ENCODE measurements at regions of chr1 and their contacts with region 1.

Region 1: DNA sequence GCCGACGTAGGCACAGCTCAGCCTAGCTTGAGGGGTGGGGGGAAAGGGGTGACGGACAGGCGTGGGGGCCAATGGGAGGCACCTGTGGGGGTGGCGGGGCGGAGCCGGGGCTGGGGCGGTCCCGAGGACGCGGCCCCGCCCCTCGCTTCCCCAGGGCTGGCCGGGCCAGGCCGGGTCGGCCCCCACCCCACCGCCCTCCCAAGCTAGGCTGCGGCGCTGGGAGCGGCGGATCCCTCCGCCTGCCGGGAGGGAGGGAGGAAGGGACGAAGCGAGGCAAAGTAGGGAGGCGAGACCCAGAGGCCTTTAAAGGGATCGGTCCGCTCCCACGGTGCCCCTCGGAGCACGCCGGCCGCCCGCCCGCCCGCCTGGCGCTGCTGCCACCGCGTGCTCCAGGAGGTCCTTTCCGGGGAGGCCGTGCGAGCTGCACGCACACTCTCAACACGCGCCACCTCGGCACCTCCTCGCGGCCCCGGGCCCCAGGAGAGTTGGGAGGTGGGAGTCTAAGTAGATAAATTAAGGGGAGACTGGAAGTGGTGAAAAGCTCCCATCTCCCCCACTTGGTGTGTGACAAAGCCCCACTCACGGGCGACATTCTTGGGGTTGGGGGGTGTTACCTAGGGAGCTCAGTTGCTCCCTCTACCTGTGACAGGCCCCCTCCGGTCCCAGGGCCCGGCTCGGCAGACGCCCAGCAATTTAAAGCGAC is 373 bp upstream of the MEF2D start:
- DNase-seq: peak; percentile 96
- ATAC-seq: peak; percentile 65
- H3K4me3 Mint-ChIP-seq: peak overlapping the region; percentile 88
- H3K27ac Mint-ChIP-seq: peak overlapping the region; percentile 99
- H3K4me1 Mint-ChIP-seq: peaks cover 73% of the 10 kb centered on the region
- H3K27me3 Mint-ChIP-seq: no peaks in the 10 kb centered on the region

Region 2: GRCh38 chr1:156212833-156213643 is 287.9 kb before region 1 on chr1 and contains the start of gene PMF1:
- CTCF ChIA-PET with region 1: interaction called, 3 read pairs
- POLR2A ChIA-PET with region 1: interaction called, 3 read pairs
- intact Hi-C with region 1: loop called in 1 of 2 experiments (anchors 5 kb)
- DNase-seq: peak; percentile 98
- ATAC-seq: peak; percentile 90
- H3K4me3 Mint-ChIP-seq: peak within 1 kb of the TSS; percentile 76
- H3K27ac Mint-ChIP-seq: peak within 1 kb of the TSS; percentile 98
- H3K4me1 Mint-ChIP-seq: peaks cover 41% of the 10 kb centered on the region
- H3K27me3 Mint-ChIP-seq: no peaks in the 10 kb centered on the region
- total RNA-seq, gene PMF1: 108 to 117 TPM

Region 3: DNA sequence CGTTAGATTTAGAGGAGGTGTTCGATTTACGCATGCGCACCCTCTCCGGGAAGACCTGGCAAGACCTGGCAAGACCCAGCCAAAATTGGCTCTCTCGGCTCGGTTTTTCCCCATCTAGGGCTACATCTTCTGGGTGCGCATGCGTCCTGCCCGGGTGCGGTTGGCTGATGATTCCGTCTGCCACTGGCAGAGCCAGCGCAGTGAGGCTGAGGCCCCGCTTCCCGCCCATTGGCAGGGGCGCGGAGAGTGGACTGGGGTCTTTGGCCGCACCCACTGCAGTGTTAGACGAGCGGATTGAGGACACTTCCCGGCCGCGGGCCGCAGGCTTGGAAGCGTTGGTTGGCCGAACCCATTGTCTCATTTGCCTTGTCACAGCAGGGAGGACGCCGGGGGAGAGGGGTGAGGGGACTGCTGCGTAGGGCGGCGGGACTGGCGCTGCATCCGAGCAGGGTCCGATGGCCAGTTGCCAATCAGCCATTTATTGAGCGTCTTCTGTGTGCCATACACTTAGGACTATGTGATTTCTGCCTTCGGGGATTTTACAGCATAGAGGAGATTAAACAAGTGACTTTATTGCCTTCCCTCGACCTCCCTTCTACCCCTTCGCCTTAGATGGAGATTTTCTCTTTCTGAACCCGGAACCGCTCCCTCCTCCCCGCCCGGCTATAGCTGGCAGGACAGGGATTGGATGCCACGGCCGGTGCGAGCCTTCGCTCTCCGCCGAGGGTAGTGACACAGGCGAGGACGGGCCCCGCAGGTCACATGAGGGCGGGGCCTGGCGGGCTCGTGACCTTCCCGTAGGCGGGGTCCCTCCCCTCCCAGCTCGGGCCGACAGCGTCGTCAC is 44.1 kb before region 1 on chr1:
- CTCF ChIA-PET with region 1: interaction called, 7 read pairs
- POLR2A ChIA-PET with region 1: interaction called, 6 read pairs
- intact Hi-C with region 1: loop called (anchors 1 kb)
- DNase-seq: peak; percentile 99
- ATAC-seq: peak; percentile 88
- H3K4me3 Mint-ChIP-seq: peak overlapping the region; percentile 79
- H3K27ac Mint-ChIP-seq: peak overlapping the region; percentile 98
- H3K4me1 Mint-ChIP-seq: peaks cover 22% of the 10 kb centered on the region
- H3K27me3 Mint-ChIP-seq: no peaks in the 10 kb centered on the region

Region 4: DNA sequence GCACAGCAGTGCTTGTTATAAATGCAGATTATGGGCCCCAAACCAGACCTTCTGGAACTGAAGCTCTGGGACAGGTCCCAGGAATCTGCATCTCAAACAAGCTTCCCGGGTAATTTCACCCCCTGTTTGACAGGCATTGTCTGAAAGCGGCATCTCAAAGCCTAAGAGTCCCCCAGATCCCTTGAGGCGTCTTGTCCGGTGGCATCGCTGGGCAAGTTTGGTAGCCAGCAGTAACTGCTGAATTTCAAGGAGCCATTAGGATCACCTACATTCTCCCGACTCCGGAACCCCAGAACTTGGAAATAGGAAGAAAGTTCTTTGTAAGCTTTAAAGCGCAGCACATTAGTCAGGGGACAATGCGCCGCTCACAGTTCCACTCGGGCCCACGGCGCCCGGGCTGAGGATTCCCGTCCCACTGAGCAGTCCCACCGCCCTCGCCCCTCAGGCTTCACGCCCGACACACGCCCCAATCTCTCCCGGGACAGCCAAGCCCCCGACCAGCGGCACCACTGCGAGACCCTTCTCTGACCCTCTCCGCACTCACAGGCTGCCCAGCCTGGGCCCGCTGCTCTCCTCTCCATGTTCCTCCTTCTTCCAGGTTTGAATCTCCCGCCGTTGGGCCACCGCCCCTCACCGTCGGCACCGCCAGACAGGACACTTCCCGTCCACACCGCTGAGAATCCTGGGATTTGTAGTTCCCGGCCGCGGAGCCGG is 71.2 kb after region 1 on chr1 and contains the start of gene IQGAP3:
- CTCF ChIA-PET with region 1: no interaction called
- POLR2A ChIA-PET with region 1: interaction called, 3 read pairs
- intact Hi-C with region 1: loop called in 1 of 2 experiments (anchors 2 kb)
- DNase-seq: peak; percentile 87
- ATAC-seq: peak; percentile 96
- H3K4me3 Mint-ChIP-seq: peak within 1 kb of the TSS; percentile 89
- H3K27ac Mint-ChIP-seq: peak within 1 kb of the TSS; percentile 73
- H3K4me1 Mint-ChIP-seq: peaks cover 22% of the 10 kb centered on the region
- H3K27me3 Mint-ChIP-seq: peaks cover 32% of the 10 kb centered on the region
- total RNA-seq, gene IQGAP3: 14.9 to 16.0 TPM

Region 5: GRCh38 chr1:156740679-156741612 is 240.0 kb after region 1 on chr1 and contains the start of gene MRPL24:
- CTCF ChIA-PET with region 1: no interaction called
- POLR2A ChIA-PET with region 1: no interaction called
- intact Hi-C with region 1: loop called in 1 of 2 experiments (anchors 2 kb)
- DNase-seq: peak; percentile 98
- ATAC-seq: peak; percentile 86
- H3K4me3 Mint-ChIP-seq: peak within 1 kb of the TSS; percentile 98
- H3K27ac Mint-ChIP-seq: peak within 1 kb of the TSS; percentile 94
- H3K4me1 Mint-ChIP-seq: peaks cover 49% of the 10 kb centered on the region
- H3K27me3 Mint-ChIP-seq: no peaks in the 10 kb centered on the region
- total RNA-seq, gene MRPL24: 81.9 to 89.7 TPM

Region 6: GRCh38 chr1:156813750-156814570 is 313.0 kb after region 1 on chr1:
- CTCF ChIA-PET with region 1: no interaction called
- POLR2A ChIA-PET with region 1: no interaction called
- intact Hi-C with region 1: loop called in 1 of 2 experiments (anchors 1 kb)
- DNase-seq: peak; percentile 86
- ATAC-seq: peak; percentile 38
- H3K4me3 Mint-ChIP-seq: peak overlapping the region; percentile 93
- H3K27ac Mint-ChIP-seq: peak overlapping the region; percentile 100
- H3K4me1 Mint-ChIP-seq: peaks cover 61% of the 10 kb centered on the region
- H3K27me3 Mint-ChIP-seq: no peaks in the 10 kb centered on the region